CD8-positive, alpha-beta T cell (primary cell): ENCODE measurements at regions of chr10 and their contacts with region 1.

Region 1: GRCh38 chr10:71756311-71757191 is 16.8 kb downstream of the VSIR start:
- DNase-seq: peak in 3 of 9 experiments; percentile 29 to 81 (median 61)
- ATAC-seq: peak; percentile 69
- H3K4me3 ChIP-seq: peak overlapping the region; percentile 7 to 38
- H3K4me3 Mint-ChIP-seq: peak overlapping the region; percentile 75
- H3K27ac ChIP-seq: peak overlapping the region; percentile 48 to 73
- H3K27ac Mint-ChIP-seq: peak overlapping the region; percentile 95
- H3K4me1 ChIP-seq: peaks cover 93% of the 10 kb centered on the region
- H3K4me1 Mint-ChIP-seq: peaks cover 91% of the 10 kb centered on the region
- H3K27me3 ChIP-seq: no peaks in the 10 kb centered on the region
- H3K27me3 Mint-ChIP-seq: no peaks in the 10 kb centered on the region
- CTCF ChIP-seq: no peak

Region 2: GRCh38 chr10:70974351-70974901 is 782.1 kb before region 1 on chr10:
- CTCF ChIA-PET with region 1: no interaction called
- POLR2A ChIA-PET with region 1: no interaction called
- intact Hi-C with region 1: no loop called
- DNase-seq: no peak
- ATAC-seq: no peak
- H3K4me3 ChIP-seq: no peak overlapping the region
- H3K4me3 Mint-ChIP-seq: no peak overlapping the region
- H3K27ac ChIP-seq: no peak overlapping the region
- H3K27ac Mint-ChIP-seq: no peak overlapping the region
- H3K4me1 ChIP-seq: no peaks in the 10 kb centered on the region
- H3K4me1 Mint-ChIP-seq: no peaks in the 10 kb centered on the region
- H3K27me3 ChIP-seq: no peaks in the 10 kb centered on the region
- H3K27me3 Mint-ChIP-seq: peaks cover 19% of the 10 kb centered on the region
- CTCF ChIP-seq: no peak

Region 3: DNA sequence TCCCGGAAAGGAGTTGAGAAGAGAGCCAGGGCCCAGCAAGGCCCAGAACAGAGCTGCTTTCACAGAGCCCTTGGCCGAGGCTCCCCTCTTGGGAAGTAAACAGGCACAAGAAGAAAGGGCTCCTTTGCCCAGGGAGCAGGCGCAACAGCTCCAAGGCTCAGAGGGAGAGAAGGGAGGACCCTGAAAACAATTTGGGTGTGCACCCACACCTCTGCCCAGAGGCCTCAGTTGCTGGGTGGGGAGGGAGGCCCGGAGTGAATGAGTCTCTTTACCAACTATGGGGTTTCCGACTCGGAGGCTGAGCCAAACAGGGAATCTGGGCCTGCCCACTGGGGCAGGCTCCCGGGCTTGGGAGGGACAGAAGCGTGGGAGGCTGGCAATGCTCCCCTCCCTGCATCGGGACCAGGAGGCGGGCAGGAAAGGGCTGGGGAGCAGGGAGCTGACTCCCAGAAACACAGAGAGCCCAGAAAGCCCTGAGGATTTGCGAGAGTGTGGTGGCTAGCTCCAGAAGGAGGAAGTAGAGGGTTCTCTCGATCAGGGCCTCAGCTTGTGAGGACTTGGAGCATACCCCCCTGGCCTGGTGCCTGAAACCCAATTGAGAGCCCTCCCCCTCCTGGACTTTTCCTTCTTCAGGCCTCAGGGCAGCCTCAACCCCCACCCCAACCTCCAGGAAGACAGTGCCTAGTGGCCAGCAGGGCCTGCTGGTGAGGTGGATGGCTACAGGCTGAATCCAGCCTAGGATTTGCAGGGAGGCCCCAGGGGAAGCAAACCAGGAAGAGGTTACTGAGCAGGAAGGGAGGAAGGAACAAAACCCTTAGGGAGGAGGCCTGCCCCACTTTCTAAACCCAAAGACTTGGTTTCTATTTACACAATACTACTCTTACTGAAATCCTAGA is 43.2 kb before region 1 on chr10:
- CTCF ChIA-PET with region 1: interaction called, 242 read pairs
- POLR2A ChIA-PET with region 1: interaction called, 14 read pairs
- intact Hi-C with region 1: no loop called
- DNase-seq: peak in 5 of 9 experiments; percentile 20 to 76 (median 39)
- ATAC-seq: peak; percentile 57
- H3K4me3 ChIP-seq: peak overlapping the region; percentile 21 to 24
- H3K4me3 Mint-ChIP-seq: peak overlapping the region; percentile 81
- H3K27ac ChIP-seq: peak overlapping the region; percentile 77 to 92
- H3K27ac Mint-ChIP-seq: peak overlapping the region; percentile 98
- H3K4me1 ChIP-seq: peaks cover 67% of the 10 kb centered on the region
- H3K4me1 Mint-ChIP-seq: peaks cover 72% of the 10 kb centered on the region
- H3K27me3 ChIP-seq: no peaks in the 10 kb centered on the region
- H3K27me3 Mint-ChIP-seq: no peaks in the 10 kb centered on the region
- CTCF ChIP-seq: no peak

Region 4: DNA sequence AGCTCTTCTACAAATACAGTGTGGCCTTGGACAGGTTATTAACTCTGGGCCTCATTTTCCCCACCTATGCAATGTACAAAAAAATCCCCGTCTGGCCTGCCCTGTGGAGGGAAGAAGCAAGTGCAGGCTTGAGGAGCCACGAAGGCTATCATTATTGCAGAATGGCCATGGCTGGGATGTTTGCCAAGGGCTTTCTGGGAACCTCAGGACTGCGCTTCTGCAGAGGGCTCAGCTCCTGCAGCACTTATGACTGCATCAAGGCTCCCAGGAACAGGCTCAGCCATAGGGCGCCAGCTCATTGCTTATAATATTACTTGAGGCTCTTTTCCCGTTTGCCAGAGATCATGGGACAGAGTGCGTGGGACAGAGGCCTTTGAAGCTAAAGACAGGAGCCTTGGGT is 16.5 kb before region 1 on chr10:
- CTCF ChIA-PET with region 1: interaction called, 61 read pairs
- POLR2A ChIA-PET with region 1: interaction called, 37 read pairs
- intact Hi-C with region 1: loop called in 1 of 2 experiments (anchors 2 kb)
- DNase-seq: no peak
- ATAC-seq: no peak
- H3K4me3 ChIP-seq: peak overlapping the region in 1 of 2 experiments; percentile 45
- H3K4me3 Mint-ChIP-seq: peak overlapping the region; percentile 41
- H3K27ac ChIP-seq: peak overlapping the region in 1 of 2 experiments; percentile 38
- H3K27ac Mint-ChIP-seq: peak overlapping the region; percentile 93
- H3K4me1 ChIP-seq: peaks cover 100% of the 10 kb centered on the region
- H3K4me1 Mint-ChIP-seq: peaks cover 99% of the 10 kb centered on the region
- H3K27me3 ChIP-seq: no peaks in the 10 kb centered on the region
- H3K27me3 Mint-ChIP-seq: no peaks in the 10 kb centered on the region
- CTCF ChIP-seq: no peak